Ascending aorta (tissue), 2 donors: ENCODE measurements at regions of chr14 and their contacts with region 1.

Region 1: GRCh38 chr14:68248481-68249255 is 429.1 kb downstream of the RAD51B start:
- DNase-seq: no peak
- H3K4me3 ChIP-seq: no peak overlapping the region
- H3K27ac ChIP-seq: peak overlapping the region; percentile 91 to 92
- H3K4me1 ChIP-seq: peaks cover 18 to 60% of the 10 kb centered on the region in 2 donors
- H3K27me3 ChIP-seq: no peaks in the 10 kb centered on the region
- CTCF ChIP-seq: peak; percentile 52 to 66 (median 62)

Region 2: GRCh38 chr14:67943947-67944346 is 304.7 kb before region 1 on chr14:
- intact Hi-C with region 1: loop called (anchors 2 kb)
- DNase-seq: peak; percentile 12 to 91
- H3K4me3 ChIP-seq: no peak overlapping the region
- H3K27ac ChIP-seq: peak overlapping the region; percentile 41 to 66
- H3K4me1 ChIP-seq: peaks cover 18 to 44% of the 10 kb centered on the region in 2 donors
- H3K27me3 ChIP-seq: no peaks in the 10 kb centered on the region
- CTCF ChIP-seq: peak; percentile 57 to 91 (median 79)

Region 3: DNA sequence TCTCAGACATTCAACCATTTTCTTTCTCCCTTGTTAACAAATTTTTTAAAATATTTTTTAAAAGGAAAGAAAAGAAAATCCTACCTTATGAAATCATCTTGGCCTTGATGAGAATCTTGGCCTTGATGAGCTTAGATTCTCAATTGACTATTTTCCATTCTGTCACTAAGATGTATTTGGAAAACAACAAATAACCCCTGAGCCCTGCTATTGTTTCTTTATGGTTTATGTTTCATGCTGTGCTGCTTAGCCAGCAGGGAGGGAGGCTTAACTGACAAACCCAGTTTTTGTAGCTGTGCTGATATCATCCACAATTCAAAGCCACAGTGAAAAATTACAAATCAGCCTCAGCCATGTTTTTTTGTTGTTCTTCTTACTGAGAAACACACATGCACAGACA is 25.0 kb before region 1 on chr14:
- intact Hi-C with region 1: no loop called
- DNase-seq: no peak
- H3K4me3 ChIP-seq: no peak overlapping the region
- H3K27ac ChIP-seq: no peak overlapping the region
- H3K4me1 ChIP-seq: no peaks in the 10 kb centered on the region
- H3K27me3 ChIP-seq: no peaks in the 10 kb centered on the region
- CTCF ChIP-seq: no peak

Region 4: DNA sequence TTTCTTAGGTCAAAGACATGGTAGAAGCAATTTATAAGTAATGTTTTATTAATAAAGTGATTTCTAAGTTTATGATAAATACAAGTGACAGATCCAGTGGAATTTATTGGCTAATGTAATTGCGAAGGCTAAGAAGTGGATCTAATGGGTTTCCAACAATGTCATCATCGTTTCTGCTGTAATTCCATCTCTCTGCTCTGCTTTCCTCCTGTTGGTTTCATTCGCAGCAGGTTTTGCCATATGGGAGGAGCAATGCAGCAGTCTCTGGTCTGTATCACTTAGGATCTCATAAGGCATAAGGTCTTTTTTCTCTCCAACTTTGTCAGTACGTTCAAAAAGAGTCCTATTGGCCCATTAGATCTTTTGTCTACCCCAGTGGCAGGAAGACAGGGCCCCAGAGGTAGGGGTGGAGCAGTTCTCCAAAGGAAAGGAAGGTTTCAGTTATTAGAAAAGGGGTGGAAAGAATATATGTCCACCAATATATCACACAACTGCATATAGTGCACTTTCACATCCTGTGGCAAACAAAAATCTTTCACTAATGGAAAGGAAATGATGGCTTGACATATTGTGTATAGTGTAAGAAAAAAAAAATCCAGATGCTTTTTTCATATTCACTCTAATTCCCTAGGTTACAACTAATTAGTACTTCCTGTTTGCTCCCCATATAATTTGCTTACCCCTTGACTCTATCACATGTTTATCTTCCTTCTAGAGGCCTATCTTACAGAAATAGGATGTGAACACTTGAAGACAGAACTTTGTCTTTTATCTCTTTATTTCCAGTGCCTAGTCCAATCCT is 92.9 kb after region 1 on chr14:
- intact Hi-C with region 1: no loop called
- DNase-seq: no peak
- H3K4me3 ChIP-seq: no peak overlapping the region
- H3K27ac ChIP-seq: no peak overlapping the region
- H3K4me1 ChIP-seq: peaks cover 0 to 3% of the 10 kb centered on the region in 2 donors
- H3K27me3 ChIP-seq: no peaks in the 10 kb centered on the region
- CTCF ChIP-seq: no peak

Region 5: DNA sequence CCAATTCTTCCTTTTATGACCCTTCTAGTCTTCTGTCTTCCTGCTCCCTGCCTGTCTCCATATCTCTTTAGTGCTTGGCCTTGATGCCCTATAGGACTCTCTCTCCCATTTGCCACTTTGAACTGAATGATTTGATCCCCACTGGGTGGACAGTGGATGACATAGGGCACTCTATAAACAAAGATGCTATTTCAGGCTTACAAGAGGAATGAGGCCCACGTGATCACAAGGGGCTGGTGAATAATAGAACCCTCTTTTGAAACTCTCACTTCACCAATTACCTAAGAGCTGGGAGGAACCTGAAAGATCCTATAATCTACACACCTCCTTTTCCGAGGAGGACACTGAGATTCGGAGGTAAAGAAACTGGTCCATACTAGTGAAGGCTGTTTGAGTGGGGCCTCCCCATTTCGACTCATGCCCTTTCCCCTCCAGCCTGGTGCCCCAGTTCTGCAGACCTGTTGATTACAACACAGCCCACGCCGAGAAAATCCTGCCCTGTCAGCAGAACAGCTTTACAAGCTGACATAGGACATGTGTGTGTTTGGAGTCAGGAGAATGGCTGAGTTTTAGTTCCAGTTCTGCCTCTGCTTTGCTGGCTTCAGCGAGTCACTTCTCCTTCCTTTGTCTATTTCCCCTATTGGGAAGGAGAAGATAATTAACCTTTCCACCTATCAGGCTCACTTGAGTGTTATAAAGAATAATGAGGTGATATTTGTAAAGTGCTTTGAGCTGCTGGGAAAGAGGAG is 143.9 kb after region 1 on chr14:
- intact Hi-C with region 1: loop called (anchors 5 kb)
- DNase-seq: peak; percentile 41 to 82
- H3K4me3 ChIP-seq: no peak overlapping the region
- H3K27ac ChIP-seq: peak overlapping the region; percentile 85 to 91
- H3K4me1 ChIP-seq: peaks cover 18 to 61% of the 10 kb centered on the region in 2 donors
- H3K27me3 ChIP-seq: no peaks in the 10 kb centered on the region
- CTCF ChIP-seq: no peak

Region 6: GRCh38 chr14:68520637-68521556 is 272.2 kb after region 1 on chr14:
- intact Hi-C with region 1: loop called (anchors 5 kb)
- DNase-seq: no peak
- H3K4me3 ChIP-seq: no peak overlapping the region
- H3K27ac ChIP-seq: peak overlapping the region; percentile 77 to 78
- H3K4me1 ChIP-seq: peaks cover 15 to 48% of the 10 kb centered on the region in 2 donors
- H3K27me3 ChIP-seq: no peaks in the 10 kb centered on the region
- CTCF ChIP-seq: no peak

Region 7: DNA sequence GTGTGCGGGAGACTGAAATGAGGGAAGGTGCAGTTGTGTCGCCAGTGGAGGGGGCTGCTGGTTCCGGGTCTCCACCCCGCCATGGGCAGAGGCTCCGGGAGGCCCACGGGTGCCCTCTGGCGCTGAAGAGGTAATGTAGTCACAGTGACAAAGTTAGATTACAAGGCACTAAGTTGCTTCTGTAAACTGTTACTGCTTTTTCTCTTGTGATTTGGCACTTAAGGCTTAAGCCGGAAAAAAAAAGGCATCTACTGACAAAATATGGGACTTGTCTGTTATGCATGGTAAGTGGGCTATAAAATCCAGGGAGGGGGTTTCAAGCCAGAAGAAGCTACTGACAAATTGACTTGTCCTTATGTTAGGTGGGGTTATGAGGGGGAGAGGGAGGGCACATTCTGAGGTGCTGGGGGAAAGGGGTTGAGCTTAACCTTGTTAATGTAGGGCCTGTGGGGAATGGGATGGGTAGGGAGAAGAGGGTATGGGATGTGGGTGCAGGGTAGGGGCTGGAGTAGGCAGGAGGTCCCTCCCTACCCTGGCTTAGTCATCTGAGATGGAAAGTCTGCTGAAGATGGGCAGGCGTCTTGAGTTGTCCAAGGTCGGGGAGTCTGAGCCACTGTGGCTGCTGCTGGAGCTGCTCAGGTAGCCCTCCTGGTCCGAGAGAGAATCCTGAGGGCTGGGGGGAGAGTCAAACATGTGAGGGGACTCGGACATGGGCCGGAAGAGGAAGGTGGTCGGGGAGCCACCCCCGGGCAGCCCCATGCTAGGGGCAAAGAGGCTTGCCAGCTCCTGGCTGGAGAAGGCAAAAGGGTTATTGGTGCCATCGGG is 540.5 kb after region 1 on chr14:
- intact Hi-C with region 1: loop called (anchors 2 kb)
- DNase-seq: peak in 1 of 2 donors; percentile 92
- H3K4me3 ChIP-seq: peak overlapping the region; percentile 77 to 92
- H3K27ac ChIP-seq: peak overlapping the region; percentile 100
- H3K4me1 ChIP-seq: peaks cover 0 to 27% of the 10 kb centered on the region in 2 donors
- H3K27me3 ChIP-seq: no peaks in the 10 kb centered on the region
- CTCF ChIP-seq: peak; percentile 80 to 81 (median 81)